ENCODE measurements at regions of chr6 and their contacts with region 1.

Region 1: DNA sequence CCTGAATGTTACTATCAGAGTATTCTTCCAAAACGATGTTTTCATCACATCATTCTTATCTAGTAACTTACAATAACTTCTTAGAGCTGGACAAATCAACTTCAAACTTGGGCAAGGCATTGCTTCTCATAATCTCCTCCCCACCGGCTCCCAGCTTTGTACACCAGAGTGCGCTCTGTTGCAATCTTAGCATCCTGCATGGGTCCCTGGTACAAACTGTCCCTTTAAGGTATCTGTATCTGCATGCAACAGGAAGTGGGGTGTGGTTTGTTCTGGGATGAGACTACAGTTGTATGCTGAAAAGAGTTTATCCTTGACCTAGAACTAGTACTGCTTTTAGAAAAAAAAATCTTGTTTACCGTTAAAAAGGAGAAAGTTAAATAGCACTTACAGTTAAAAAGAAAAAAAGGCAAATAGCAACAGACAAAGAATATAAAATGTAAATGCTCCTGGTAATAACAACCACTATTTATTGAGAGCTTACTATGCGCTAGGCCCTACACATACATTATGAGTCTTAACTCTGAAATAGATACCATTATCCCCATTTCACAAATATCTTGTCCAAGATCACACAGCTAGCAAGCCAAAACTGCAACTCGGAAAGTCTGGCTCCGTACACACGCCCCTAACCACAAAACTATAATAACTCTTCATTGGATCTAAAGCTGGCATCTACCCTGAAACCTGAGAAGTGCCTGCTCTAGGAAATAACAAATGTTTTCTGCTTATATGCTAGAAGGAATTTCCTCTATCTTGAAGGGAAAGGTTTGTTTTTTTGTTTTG is 9.8 kb upstream of the HECA start:
- DNase-seq: peak in 1 of 4 donors; percentile 67
- ATAC-seq: peak; percentile 91
- H3K4me3 ChIP-seq: no peak overlapping the region
- H3K27ac ChIP-seq: peak overlapping the region; percentile 24 to 65
- H3K4me1 ChIP-seq: peaks cover 0 to 21% of the 10 kb centered on the region in 2 donors
- H3K27me3 ChIP-seq: no peaks in the 10 kb centered on the region
- CTCF ChIP-seq: peak; percentile 28 to 43

Region 2: GRCh38 chr6:139091826-139092225 is 33.3 kb before region 1 on chr6:
- intact Hi-C with region 1: no loop called
- DNase-seq: no peak
- ATAC-seq: no peak
- H3K4me3 ChIP-seq: no peak overlapping the region
- H3K27ac ChIP-seq: no peak overlapping the region
- H3K4me1 ChIP-seq: no peaks in the 10 kb centered on the region
- H3K27me3 ChIP-seq: no peaks in the 10 kb centered on the region
- CTCF ChIP-seq: no peak

Region 3: GRCh38 chr6:139291813-139292619 is 166.9 kb after region 1 on chr6 and contains the start of gene TXLNB:
- intact Hi-C with region 1: no loop called
- DNase-seq: peak; percentile 81 to 87 (median 84)
- ATAC-seq: peak; percentile 88
- H3K4me3 ChIP-seq: no peak within 1 kb of the TSS
- H3K27ac ChIP-seq: peak within 1 kb of the TSS; percentile 81
- H3K4me1 ChIP-seq: peaks cover 6 to 51% of the 10 kb centered on the region in 2 donors
- H3K27me3 ChIP-seq: no peaks in the 10 kb centered on the region
- CTCF ChIP-seq: no peak
- polyA plus RNA-seq, gene TXLNB: 1.2 to 2.2 (median 1.9) TPM

Region 4: GRCh38 chr6:139369568-139370282 is 244.6 kb after region 1 on chr6:
- intact Hi-C with region 1: loop called in 1 of 2 experiments (anchors 5 kb)
- DNase-seq: peak in 2 of 4 donors; percentile 56 to 62
- ATAC-seq: peak; percentile 10
- H3K4me3 ChIP-seq: no peak overlapping the region
- H3K27ac ChIP-seq: peak overlapping the region; percentile 97 to 99
- H3K4me1 ChIP-seq: peaks cover 19 to 40% of the 10 kb centered on the region in 2 donors
- H3K27me3 ChIP-seq: no peaks in the 10 kb centered on the region
- CTCF ChIP-seq: peak; percentile 66 to 71

Region 5: GRCh38 chr6:139433631-139434419 is 308.7 kb after region 1 on chr6:
- intact Hi-C with region 1: no loop called
- DNase-seq: no peak
- ATAC-seq: peak; percentile 72
- H3K4me3 ChIP-seq: no peak overlapping the region
- H3K27ac ChIP-seq: no peak overlapping the region
- H3K4me1 ChIP-seq: peaks cover 0 to 13% of the 10 kb centered on the region in 2 donors
- H3K27me3 ChIP-seq: no peaks in the 10 kb centered on the region
- CTCF ChIP-seq: no peak

Region 6: DNA sequence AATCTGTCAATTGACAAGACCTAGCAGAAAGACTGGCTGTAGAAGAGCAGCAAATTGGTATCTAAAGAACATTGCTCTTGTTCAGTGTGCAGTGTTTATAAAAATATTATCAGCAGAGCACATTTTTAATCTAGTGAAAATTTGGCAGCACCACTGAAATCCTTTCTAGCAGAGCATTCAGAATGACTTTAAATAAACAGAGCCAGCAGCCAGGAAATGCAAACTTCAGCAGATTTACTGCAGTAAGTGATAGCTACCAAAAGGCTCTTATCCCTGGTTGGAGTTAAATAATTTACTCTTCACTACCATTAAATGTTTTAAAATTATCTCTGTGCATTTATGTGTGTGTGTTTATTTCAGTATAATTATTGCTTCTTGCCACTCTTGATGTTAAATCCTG is 840.3 kb after region 1 on chr6:
- intact Hi-C with region 1: no loop called
- DNase-seq: peak in 1 of 4 donors; percentile 65
- ATAC-seq: no peak
- H3K4me3 ChIP-seq: no peak overlapping the region
- H3K27ac ChIP-seq: no peak overlapping the region
- H3K4me1 ChIP-seq: peaks cover 0 to 11% of the 10 kb centered on the region in 2 donors
- H3K27me3 ChIP-seq: no peaks in the 10 kb centered on the region
- CTCF ChIP-seq: no peak